PC-9 (cell line): ENCODE measurements at regions of chr18 and their contacts with region 1.

Region 1: DNA sequence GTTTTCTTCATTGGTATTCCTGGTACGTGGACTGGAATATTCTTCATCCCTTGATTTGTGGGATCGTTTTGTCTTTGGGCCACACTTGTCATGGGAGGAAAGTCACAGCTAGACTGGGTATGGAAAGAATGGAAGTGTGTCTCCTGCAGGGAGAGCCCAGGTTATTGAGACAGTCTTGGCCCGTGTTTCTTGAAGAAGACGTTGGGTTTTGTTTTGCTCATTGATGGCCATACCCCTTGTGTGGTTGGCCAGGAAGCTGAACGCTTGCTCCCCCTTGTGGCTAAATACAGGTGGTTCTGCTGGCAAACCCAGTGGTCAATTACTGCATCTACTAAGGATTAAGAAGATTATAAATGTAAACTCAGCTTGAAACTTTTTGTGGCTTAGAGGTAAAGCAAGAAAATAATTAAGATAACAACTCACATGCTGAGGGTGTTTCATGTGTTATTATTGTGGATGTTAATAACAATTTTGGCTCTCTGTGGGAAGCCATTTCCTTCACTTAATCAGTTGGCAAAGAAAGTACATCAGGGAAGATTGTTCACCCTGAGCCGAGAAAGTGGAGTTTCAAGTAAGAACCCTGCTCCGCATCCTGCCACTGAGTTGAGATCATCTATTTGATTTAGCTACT is 91.8 kb downstream of the NEDD4L start:
- DNase-seq: peak; percentile 41 to 63
- H3K4me3 ChIP-seq: no peak overlapping the region
- H3K27ac ChIP-seq: no peak overlapping the region
- H3K4me1 ChIP-seq: peaks cover 27% of the 10 kb centered on the region
- H3K27me3 ChIP-seq: no peaks in the 10 kb centered on the region
- CTCF ChIP-seq: peak; percentile 88

Region 2: GRCh38 chr18:56606618-56607017 is 1529.2 kb before region 1 on chr18:
- CTCF ChIA-PET with region 1: interaction called, 10 read pairs
- POLR2A ChIA-PET with region 1: no interaction called
- intact Hi-C with region 1: no loop called
- DNase-seq: no peak
- H3K4me3 ChIP-seq: no peak overlapping the region
- H3K27ac ChIP-seq: no peak overlapping the region
- H3K4me1 ChIP-seq: no peaks in the 10 kb centered on the region
- H3K27me3 ChIP-seq: no peaks in the 10 kb centered on the region
- CTCF ChIP-seq: no peak

Region 3: GRCh38 chr18:58148954-58149471 is 13.2 kb after region 1 on chr18:
- CTCF ChIA-PET with region 1: interaction called, 25 read pairs
- POLR2A ChIA-PET with region 1: no interaction called
- intact Hi-C with region 1: no loop called
- DNase-seq: peak in 1 of 2 experiments; percentile 39
- H3K4me3 ChIP-seq: no peak overlapping the region
- H3K27ac ChIP-seq: peak overlapping the region; percentile 11; the same call in 1 of the 2 replicates
- H3K4me1 ChIP-seq: peaks cover 10% of the 10 kb centered on the region
- H3K27me3 ChIP-seq: no peaks in the 10 kb centered on the region
- CTCF ChIP-seq: no peak

Region 4: GRCh38 chr18:58180738-58181353 is 45.0 kb after region 1 on chr18:
- CTCF ChIA-PET with region 1: interaction called, 4 read pairs
- POLR2A ChIA-PET with region 1: interaction called, 4 read pairs
- intact Hi-C with region 1: loop called (anchors 2 kb)
- DNase-seq: peak; percentile 43 to 52
- H3K4me3 ChIP-seq: no peak overlapping the region
- H3K27ac ChIP-seq: no peak overlapping the region
- H3K4me1 ChIP-seq: peaks cover 60% of the 10 kb centered on the region
- H3K27me3 ChIP-seq: no peaks in the 10 kb centered on the region
- CTCF ChIP-seq: peak; percentile 94

Region 5: DNA sequence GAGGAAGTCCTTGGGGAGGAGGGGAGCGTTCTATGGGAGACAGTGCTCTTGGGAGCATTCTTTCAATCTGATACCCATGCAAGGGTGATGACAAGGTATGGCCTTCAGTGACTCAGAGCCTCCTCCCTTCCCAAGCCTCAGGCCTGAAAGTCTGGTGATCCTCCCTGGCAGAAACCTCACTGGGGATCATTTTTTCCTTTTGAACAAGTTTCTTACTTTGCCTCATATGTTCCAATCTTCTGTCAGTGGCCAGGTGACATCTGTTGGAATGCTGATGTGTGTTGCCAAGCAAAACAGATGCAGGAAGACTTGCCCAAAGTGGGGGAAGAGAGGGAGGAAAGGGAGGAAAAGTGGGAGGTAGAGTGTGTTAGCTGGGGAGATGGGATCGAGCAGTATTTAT is 133.0 kb after region 1 on chr18:
- CTCF ChIA-PET with region 1: no interaction called
- POLR2A ChIA-PET with region 1: no interaction called
- intact Hi-C with region 1: loop called (anchors 5 kb)
- DNase-seq: peak; percentile 71 to 97
- H3K4me3 ChIP-seq: peak overlapping the region; percentile 47; the same call in 1 of the 2 replicates
- H3K27ac ChIP-seq: peak overlapping the region; percentile 95
- H3K4me1 ChIP-seq: peaks cover 76% of the 10 kb centered on the region
- H3K27me3 ChIP-seq: no peaks in the 10 kb centered on the region
- CTCF ChIP-seq: no peak

Region 6: DNA sequence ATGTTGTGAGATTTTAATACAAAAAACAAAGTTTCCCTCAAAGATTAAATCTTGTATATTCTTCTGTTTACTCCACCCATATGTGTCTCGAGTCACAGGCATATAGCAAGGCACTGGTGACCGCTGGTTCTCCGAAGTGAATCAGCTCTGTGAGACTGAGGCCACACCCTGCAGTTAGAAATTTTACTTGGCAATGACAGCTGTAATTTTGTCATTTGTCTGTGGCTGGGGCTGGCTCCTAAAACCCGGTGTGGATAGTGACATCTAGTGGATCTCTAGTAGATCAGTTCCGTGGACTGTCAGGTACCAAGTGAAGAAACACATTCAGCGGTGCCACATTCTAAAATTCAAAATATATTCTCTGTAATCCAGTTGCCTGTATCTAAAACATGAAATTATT is 186.2 kb after region 1 on chr18:
- CTCF ChIA-PET with region 1: no interaction called
- POLR2A ChIA-PET with region 1: no interaction called
- intact Hi-C with region 1: loop called (anchors 2 kb)
- DNase-seq: peak; percentile 61 to 86
- H3K4me3 ChIP-seq: no peak overlapping the region
- H3K27ac ChIP-seq: peak overlapping the region; percentile 58
- H3K4me1 ChIP-seq: peaks cover 12% of the 10 kb centered on the region
- H3K27me3 ChIP-seq: no peaks in the 10 kb centered on the region
- CTCF ChIP-seq: peak; percentile 68